ENCODE measurements at regions of chr11 and their contacts with region 1.

Region 1: GRCh38 chr11:17923217-17923616 is 89.6 kb downstream of the SERGEF start:
- DNase-seq: no peak
- H3K4me3 ChIP-seq: no peak overlapping the region
- H3K27ac ChIP-seq: no peak overlapping the region
- H3K4me1 ChIP-seq: no peaks in the 10 kb centered on the region
- H3K27me3 ChIP-seq: no peaks in the 10 kb centered on the region
- CTCF ChIP-seq: no peak
- EP300 ChIP-seq: no peak
- POLR2A ChIP-seq: no peak

Region 2: DNA sequence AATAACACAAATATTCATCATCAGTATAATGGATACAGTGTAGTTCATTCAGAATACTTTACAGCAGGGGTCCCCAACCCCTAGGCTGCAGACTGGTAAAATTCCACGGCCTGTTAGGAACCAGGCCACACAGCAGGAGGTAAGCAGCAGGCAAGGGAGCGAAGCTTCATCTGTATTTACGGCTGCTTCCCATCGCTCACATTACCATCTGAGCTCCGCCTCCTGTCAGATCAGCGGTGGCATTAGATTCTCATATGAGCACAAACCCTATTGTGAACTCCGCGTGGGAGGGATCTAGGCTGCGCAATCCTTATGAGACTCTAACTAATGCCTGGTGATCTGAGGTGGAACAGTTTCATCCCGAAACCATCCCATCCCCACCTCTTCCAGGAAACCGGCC is 35.4 kb before region 1 on chr11:
- in situ Hi-C with region 1: no loop called
- intact Hi-C with region 1: loop called (anchors 1 kb)
- DNase-seq: no peak
- H3K4me3 ChIP-seq: no peak overlapping the region
- H3K27ac ChIP-seq: no peak overlapping the region
- H3K4me1 ChIP-seq: no peaks in the 10 kb centered on the region
- H3K27me3 ChIP-seq: no peaks in the 10 kb centered on the region
- CTCF ChIP-seq: no peak
- EP300 ChIP-seq: no peak
- POLR2A ChIP-seq: no peak

Measured in transverse colon (tissue), 4 donors.